ENCODE measurements at regions of chr4 and their contacts with region 1.

Region 1: DNA sequence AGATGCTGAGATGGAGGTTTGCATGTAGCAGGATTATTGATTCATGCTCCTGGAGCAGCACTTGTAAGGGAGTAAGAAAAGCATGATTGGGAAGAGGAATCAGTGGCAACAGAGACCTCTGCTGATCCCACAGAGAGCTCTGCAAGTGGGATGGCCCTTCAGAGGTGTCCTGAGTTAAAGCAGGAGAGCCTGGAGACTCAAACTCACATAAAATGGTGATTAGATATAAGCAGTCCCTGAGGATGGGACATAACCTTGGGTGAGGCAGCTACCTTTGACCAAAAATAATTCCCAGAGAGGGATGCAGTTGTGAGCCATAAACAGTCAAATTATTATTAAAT is 25.4 kb upstream of the BMPR1B start:
- DNase-seq: no peak
- ATAC-seq: no peak
- H3K4me3 ChIP-seq: no peak overlapping the region
- H3K27ac ChIP-seq: no peak overlapping the region
- H3K4me1 ChIP-seq: no peaks in the 10 kb centered on the region
- H3K27me3 ChIP-seq: peaks cover 4% of the 10 kb centered on the region in 2 experiments; a peak in 4 of 5 replicates
- CTCF ChIP-seq: no peak
- EP300 ChIP-seq: no peak
- POLR2A ChIP-seq: no peak
- RAD21 ChIP-seq: no peak

Region 2: DNA sequence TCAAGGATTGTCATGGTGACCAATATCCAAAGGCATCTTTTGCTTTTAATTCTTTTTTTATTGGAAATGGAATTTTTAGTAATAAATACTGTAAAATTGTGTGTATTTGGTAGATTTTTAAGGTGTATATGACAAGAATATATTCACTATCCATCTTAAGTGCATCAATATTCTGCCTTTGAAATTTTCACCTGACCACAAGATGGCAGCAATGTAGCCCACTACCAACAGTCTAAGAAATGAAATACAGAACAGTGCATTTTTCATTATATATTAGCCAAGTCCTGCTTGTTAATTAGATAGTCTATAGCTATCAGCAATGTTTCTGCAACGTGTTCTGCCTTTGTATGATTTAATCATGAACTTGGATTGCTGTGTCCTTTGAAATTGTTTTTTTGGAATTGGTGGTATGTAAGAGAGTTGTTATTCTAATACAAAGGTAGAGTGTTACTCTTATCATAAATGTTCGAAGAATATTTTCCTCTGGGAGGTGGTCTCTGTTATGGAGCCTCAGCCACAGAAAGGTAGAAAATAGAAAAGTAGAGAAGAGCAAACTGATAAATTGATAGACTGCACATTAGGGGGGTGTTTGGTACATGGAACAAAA is 427.9 kb before region 1 on chr4:
- CTCF ChIA-PET with region 1: no interaction called
- POLR2A ChIA-PET with region 1: no interaction called
- in situ Hi-C with region 1: no loop called
- intact Hi-C with region 1: loop called (anchors 5 kb)
- DNase-seq: peak in 3 of 4 experiments; percentile 15 to 59 (median 27)
- ATAC-seq: peak; percentile 85
- H3K4me3 ChIP-seq: no peak overlapping the region
- H3K27ac ChIP-seq: no peak overlapping the region
- H3K4me1 ChIP-seq: peaks cover 0 to 13% of the 10 kb centered on the region in 2 experiments; a peak in 2 of 5 replicates
- H3K27me3 ChIP-seq: no peaks in the 10 kb centered on the region
- CTCF ChIP-seq: peak; percentile 53 to 80 (median 58); a peak in 5 of 6 replicates
- EP300 ChIP-seq: no peak
- POLR2A ChIP-seq: no peak
- RAD21 ChIP-seq: peak; percentile 65 to 79